Sigmoid colon (tissue), 7 donors: ENCODE measurements at regions of chr4 and their contacts with region 1.

Region 1: DNA sequence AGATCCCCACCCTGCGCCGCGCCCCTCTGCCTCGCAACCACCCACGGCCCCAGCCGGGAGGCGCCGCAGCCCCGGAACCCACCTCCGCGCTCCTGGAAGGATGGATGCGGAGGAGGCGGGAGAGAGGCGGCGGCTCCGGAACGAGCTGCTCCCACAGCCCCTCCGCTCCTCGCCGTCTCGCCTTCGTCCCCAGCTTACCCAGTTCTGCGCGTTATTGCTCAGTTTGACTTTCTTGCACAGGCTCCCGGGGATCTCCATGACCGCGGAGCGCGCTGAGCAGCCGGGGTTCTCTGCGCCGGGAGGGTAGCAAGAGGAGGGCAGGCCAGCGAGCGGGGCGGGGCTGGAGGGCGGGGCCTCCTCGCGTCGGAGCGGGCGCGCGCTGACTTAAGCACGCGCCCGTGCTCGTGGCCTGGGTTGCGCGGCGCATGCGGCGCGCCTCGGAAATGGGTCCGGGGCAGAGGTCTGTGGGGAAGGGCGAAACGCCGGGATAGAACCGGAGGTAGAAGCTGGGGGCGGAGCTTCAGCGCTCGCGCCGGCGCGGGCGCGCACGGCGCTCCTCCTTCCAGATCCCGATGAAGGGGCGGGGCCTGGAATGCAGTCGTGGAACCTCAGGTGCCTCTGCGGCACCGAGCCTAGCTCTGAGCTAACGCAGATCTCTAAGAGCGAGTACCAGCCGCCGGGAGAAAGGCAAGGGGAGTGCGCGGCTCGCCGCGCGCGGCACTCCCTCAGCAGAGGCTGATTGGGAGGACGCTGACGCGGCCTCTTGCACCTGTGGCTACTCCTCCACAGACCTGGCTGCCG is at the start of gene PAPSS1:
- DNase-seq: peak; percentile 98
- H3K4me3 ChIP-seq: peak within 1 kb of the TSS; percentile 82 to 97 (median 96)
- H3K27ac ChIP-seq: peak within 1 kb of the TSS; percentile 85 to 90 (median 89)
- H3K4me1 ChIP-seq: peaks cover 0 to 24% (median 12%) of the 10 kb centered on the region in 4 donors
- H3K27me3 ChIP-seq: no peaks in the 10 kb centered on the region
- CTCF ChIP-seq: no peak
- EP300 ChIP-seq: peak in 1 of 4 donors; percentile 22
- POLR2A ChIP-seq: peak; percentile 67 to 73
- total RNA-seq, gene PAPSS1: 25.5 to 30.0 (median 28.8) TPM

Region 2: DNA sequence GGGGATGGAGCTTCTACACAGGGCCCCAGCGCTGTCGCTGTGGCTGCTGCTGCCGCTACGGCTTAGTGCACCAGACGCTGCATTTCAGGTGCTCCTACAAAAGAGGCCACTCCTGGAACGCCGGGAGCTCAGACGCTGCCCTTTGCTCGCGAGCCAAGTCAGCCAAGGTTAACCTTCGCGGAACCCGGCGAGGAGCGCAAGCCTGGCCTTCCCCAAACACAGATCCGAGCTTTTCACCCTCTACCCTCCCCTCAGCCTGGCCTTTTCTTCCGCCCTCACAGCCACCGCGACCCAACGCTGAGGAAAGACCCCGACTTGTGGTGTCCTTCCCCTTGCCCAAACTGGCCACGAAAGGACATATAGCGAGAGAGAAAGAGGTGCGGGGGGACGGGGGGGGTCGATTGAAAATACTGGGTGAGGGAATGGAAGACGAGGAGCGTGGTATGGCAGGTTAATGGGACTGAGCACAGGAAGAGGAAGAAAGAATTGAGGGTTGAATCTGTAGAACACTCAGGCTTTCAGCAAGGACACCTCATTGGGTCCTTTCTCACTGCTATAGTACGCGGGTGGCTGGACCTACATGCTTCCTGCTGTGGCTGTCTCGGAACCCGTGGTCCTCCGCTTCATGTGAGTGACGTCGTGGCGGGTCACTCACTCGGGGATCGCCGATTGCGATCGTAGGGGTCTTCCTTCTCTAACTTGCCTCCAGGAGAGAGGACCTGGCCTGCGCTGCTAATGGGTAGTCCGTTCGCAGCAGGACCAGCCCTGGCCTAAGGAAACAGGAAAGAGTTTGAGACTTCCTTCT is 1404.0 kb before region 1 on chr4 and contains the starts of genes AIMP1 and TBCK:
- intact Hi-C with region 1: loop called (anchors 10 kb)
- DNase-seq: peak; percentile 93
- H3K4me3 ChIP-seq: peak within 1 kb of the TSS; percentile 73 to 97 (median 87)
- H3K27ac ChIP-seq: peak within 1 kb of the TSS; percentile 92 to 99 (median 94)
- H3K4me1 ChIP-seq: peaks cover 0 to 43% (median 30%) of the 10 kb centered on the region in 4 donors
- H3K27me3 ChIP-seq: no peaks in the 10 kb centered on the region
- CTCF ChIP-seq: no peak
- EP300 ChIP-seq: no peak
- POLR2A ChIP-seq: peak; percentile 81 to 86
- total RNA-seq, gene AIMP1: 24.4 to 36.0 (median 31.0) TPM
- total RNA-seq, gene TBCK: 26.3 to 43.5 (median 38.4) TPM

Region 3: DNA sequence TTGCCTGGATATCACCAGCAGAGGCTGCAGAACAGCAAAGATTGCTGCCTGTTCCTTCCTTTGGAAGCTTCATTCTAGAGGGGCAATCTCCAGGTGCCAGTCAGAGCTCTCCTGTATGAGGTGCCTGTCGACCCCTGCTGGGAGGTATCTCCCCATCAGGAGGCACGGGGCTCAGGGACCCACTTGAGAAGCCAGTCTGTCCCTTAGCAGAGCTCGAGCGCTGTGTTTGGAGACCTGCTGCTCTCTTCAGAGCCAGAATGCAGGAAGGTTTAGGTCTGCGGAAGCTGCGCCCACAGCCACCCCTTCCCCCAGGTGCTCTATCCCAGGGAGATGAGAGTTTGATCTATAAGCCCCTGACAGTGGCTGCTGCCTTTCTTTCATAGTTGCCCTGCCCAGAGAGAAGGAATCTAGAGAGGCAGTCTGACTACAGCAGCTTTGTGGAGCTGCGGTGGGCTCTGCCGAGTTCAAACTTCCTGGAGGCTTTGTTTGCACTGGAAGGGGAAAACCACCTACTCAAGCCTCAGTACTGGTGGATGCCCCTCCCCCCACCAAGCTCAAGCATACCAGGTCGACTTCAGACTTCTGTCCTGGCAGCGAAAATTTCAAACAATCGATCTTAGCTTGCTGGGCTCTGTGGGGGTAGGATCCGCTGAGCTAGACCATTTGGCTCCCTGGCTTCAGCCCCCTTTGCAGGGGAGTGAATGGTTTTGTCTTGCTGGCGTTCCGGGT is 741.9 kb before region 1 on chr4:
- intact Hi-C with region 1: no loop called
- DNase-seq: no peak
- H3K4me3 ChIP-seq: no peak overlapping the region
- H3K27ac ChIP-seq: no peak overlapping the region
- H3K4me1 ChIP-seq: no peaks in the 10 kb centered on the region
- H3K27me3 ChIP-seq: no peaks in the 10 kb centered on the region
- CTCF ChIP-seq: no peak
- EP300 ChIP-seq: no peak
- POLR2A ChIP-seq: no peak

Region 4: DNA sequence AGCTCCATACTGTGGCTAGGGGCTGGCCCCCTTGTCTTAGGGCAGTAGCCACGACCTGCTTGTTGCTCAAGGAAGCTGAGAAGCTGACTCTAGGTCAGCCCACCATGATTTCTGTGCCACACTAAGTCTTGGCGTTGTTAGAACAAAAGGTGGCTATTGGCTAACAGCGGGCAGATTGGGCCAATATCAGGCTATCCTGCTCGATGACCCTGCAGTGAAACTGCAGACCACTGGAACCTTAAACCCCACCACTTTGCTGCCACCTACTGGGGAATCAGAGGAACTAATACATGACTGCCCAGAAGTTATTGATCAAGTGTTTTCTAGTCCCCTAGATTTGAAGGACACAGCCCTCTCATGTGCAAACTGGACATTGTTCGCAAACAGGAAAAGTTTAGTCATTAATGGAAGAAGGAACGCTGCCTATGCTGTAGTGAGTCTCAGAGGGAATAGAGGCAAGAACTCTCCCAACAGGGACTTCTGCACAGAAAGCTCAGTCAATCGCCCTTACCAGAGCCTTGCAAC is 16.9 kb after region 1 on chr4:
- intact Hi-C with region 1: loop called (anchors 2 kb)
- DNase-seq: no peak
- H3K4me3 ChIP-seq: no peak overlapping the region
- H3K27ac ChIP-seq: no peak overlapping the region
- H3K4me1 ChIP-seq: peaks cover 0 to 48% (median 28%) of the 10 kb centered on the region in 4 donors
- H3K27me3 ChIP-seq: no peaks in the 10 kb centered on the region
- CTCF ChIP-seq: peak; percentile 17 to 71 (median 57)
- EP300 ChIP-seq: no peak
- POLR2A ChIP-seq: no peak

Region 5: GRCh38 chr4:107780665-107781064 is 60.5 kb after region 1 on chr4:
- intact Hi-C with region 1: no loop called
- DNase-seq: no peak
- H3K4me3 ChIP-seq: no peak overlapping the region
- H3K27ac ChIP-seq: no peak overlapping the region
- H3K4me1 ChIP-seq: peaks cover 0 to 5% (median 0%) of the 10 kb centered on the region in 4 donors
- H3K27me3 ChIP-seq: no peaks in the 10 kb centered on the region
- CTCF ChIP-seq: no peak
- EP300 ChIP-seq: no peak
- POLR2A ChIP-seq: no peak

Region 6: DNA sequence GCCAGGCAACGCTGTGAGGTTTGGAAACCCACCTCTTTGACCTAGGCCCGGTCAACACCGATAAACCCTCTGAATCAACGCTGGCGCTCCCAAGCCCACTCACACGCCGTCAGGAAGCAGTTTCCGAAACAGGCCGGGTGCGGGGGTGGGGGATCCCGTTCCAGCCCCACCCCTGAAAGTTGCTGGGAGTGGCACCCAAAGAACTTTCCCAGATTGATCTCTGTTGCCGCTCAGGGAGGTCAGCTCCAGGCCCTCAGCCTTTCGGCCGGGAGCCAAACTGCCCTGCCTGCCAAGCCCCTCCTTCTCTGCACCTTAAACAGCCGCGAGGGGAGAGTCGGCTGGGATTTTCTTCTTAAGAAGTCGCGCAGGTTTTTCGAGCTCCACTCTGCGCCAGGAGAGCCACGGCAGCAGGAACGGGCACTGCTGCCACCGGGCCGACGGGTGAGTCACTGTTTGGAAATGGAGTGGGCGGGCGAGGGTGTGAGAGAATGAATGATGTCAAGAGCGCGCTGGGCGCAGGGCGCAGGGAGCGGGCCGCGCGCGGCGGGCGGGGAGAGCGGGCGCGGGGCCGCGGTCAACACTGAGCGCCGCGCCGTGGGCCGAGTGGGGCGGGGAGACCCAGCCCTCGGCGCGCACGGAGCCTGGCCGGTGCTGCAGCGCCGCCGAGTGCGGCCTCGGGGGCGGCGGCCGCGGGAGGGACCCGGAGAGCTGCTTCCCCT is 104.4 kb after region 1 on chr4 and contains the start of gene SGMS2:
- intact Hi-C with region 1: loop called (anchors 5 kb)
- DNase-seq: peak; percentile 95
- H3K4me3 ChIP-seq: peak within 1 kb of the TSS; percentile 80 to 92 (median 89)
- H3K27ac ChIP-seq: peak within 1 kb of the TSS; percentile 93 to 97 (median 96)
- H3K4me1 ChIP-seq: peaks cover 0 to 40% (median 32%) of the 10 kb centered on the region in 4 donors
- H3K27me3 ChIP-seq: no peaks in the 10 kb centered on the region
- CTCF ChIP-seq: no peak
- EP300 ChIP-seq: peak in 1 of 4 donors; percentile 3
- POLR2A ChIP-seq: peak; percentile 50 to 70
- total RNA-seq, gene SGMS2: 101 to 204 (median 147) TPM

Region 7: GRCh38 chr4:107930821-107931774 is 211.0 kb after region 1 on chr4 and contains the start of gene CYP2U1:
- intact Hi-C with region 1: loop called (anchors 1 kb)
- DNase-seq: peak; percentile 95
- H3K4me3 ChIP-seq: peak within 1 kb of the TSS; percentile 70 to 80 (median 76)
- H3K27ac ChIP-seq: peak within 1 kb of the TSS; percentile 81 to 88 (median 87)
- H3K4me1 ChIP-seq: peaks cover 0 to 31% (median 18%) of the 10 kb centered on the region in 4 donors
- H3K27me3 ChIP-seq: no peaks in the 10 kb centered on the region
- CTCF ChIP-seq: peak in 1 of 4 experiments; percentile 12
- EP300 ChIP-seq: no peak
- POLR2A ChIP-seq: peak; percentile 19 to 41
- total RNA-seq, gene CYP2U1: 11.9 to 16.1 (median 15.2) TPM

Region 8: GRCh38 chr4:107989537-107990386 is 269.6 kb after region 1 on chr4 and contains the start of gene HADH:
- intact Hi-C with region 1: loop called (anchors 5 kb)
- DNase-seq: peak; percentile 97
- H3K4me3 ChIP-seq: peak within 1 kb of the TSS; percentile 63 to 92 (median 86)
- H3K27ac ChIP-seq: peak within 1 kb of the TSS; percentile 82 to 96 (median 93)
- H3K4me1 ChIP-seq: peaks cover 0 to 63% (median 57%) of the 10 kb centered on the region in 4 donors
- H3K27me3 ChIP-seq: no peaks in the 10 kb centered on the region
- CTCF ChIP-seq: no peak
- EP300 ChIP-seq: peak in 1 of 4 donors; percentile 26
- POLR2A ChIP-seq: peak; percentile 85 to 91
- total RNA-seq, gene HADH: 46.6 to 119 (median 65.0) TPM